ENCODE measurements at regions of chr20 and their contacts with region 1.

Region 1: DNA sequence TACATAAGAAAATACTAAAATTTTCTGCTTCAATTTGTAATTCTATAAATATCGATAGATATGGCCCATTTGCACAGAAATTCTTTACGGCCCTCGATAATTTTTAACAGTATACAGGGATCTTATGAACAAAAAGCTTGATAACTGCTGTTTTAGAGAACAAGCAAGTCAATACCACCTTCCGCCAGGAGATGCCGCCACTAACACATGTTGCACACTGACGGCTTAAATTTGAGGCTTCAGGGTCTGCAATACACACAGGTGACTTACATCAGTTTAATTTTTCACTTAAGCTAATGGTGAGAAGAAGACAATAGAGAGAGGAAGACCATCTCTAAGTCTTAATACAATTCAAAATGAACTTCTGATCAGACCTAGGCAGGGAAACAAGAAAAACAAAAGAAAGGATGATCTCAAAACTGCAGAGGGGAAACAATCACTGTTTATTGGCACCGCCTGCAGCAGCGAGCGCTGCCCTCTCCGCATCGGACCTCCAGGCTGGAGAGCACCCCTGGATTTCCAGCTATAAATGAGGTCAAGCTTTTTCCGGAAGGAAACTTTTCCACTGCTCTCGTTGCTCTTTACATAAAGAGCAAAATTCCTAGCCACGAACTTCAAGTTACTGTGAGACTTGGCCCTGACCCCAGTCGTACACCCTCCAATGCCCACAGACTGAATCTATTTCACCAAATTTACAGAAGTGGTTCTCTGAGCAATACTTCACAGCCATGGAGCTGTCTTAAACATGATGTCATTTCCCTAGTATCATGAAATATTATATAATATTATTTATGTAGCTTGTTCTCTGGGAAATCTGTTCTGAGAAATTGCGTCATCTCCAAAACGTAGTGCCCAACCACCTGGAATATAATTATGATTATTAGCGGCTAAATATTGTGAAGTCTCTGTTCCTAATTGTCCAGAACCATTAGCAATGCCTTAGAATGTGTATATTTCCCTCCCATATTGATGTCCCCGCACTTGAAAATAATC is 54.1 kb downstream of the OTOR start:
- DNase-seq: peak; percentile 29 to 35
- ATAC-seq: no peak
- H3K4me3 ChIP-seq: no peak overlapping the region
- H3K27ac ChIP-seq: no peak overlapping the region
- H3K4me1 ChIP-seq: no peaks in the 10 kb centered on the region
- H3K27me3 ChIP-seq: peaks cover 0 to 77% (median 48%) of the 10 kb centered on the region in 7 donors
- CTCF ChIP-seq: peak; percentile 63 to 87 (median 77)

Region 2: GRCh38 chr20:16816192-16816591 is 14.0 kb after region 1 on chr20:
- intact Hi-C with region 1: no loop called
- DNase-seq: no peak
- ATAC-seq: no peak
- H3K4me3 ChIP-seq: no peak overlapping the region
- H3K27ac ChIP-seq: no peak overlapping the region
- H3K4me1 ChIP-seq: no peaks in the 10 kb centered on the region
- H3K27me3 ChIP-seq: peaks cover 0 to 16% (median 0%) of the 10 kb centered on the region in 7 donors
- CTCF ChIP-seq: no peak

Region 3: DNA sequence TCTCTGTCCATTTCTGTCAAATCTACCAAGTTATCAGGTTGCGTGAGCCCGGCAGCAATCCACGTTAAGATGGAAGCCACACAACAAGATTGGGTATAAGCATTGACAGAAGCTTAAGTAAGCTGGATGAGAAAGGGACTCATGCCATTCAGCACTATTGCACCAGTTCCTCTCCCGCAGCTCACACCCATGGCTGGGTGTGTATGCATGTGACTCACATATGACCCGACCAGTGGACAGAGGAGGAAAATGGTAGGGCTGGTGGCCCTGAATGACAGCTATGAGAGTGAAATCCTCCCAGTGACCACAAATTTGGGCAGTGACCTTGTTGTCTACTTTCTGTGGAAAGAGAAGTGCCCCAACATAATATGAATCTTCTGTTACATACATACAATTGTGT is 59.5 kb after region 1 on chr20:
- intact Hi-C with region 1: no loop called
- DNase-seq: no peak
- ATAC-seq: no peak
- H3K4me3 ChIP-seq: no peak overlapping the region
- H3K27ac ChIP-seq: no peak overlapping the region
- H3K4me1 ChIP-seq: no peaks in the 10 kb centered on the region
- H3K27me3 ChIP-seq: no peaks in the 10 kb centered on the region
- CTCF ChIP-seq: no peak

Region 4: GRCh38 chr20:17431621-17432364 is 629.6 kb after region 1 on chr20:
- intact Hi-C with region 1: loop called in 9 of 10 experiments (anchors 2 to 5 kb)
- DNase-seq: peak; percentile 34 to 36
- ATAC-seq: no peak
- H3K4me3 ChIP-seq: no peak overlapping the region
- H3K27ac ChIP-seq: no peak overlapping the region
- H3K4me1 ChIP-seq: peaks cover 0 to 7% (median 0%) of the 10 kb centered on the region in 9 donors
- H3K27me3 ChIP-seq: peaks cover 0 to 64% (median 31%) of the 10 kb centered on the region in 7 donors
- CTCF ChIP-seq: peak; percentile 71 to 93 (median 88)

Region 5: GRCh38 chr20:17995967-17996819 is 1194.0 kb after region 1 on chr20:
- intact Hi-C with region 1: loop called in 1 of 10 experiments (anchors 10 kb)
- DNase-seq: peak in 1 of 2 donors; percentile 46
- ATAC-seq: peak in 6 of 8 donors; percentile 62 to 79 (median 70)
- H3K4me3 ChIP-seq: peak overlapping the region in 1 of 10 donors; percentile 15
- H3K27ac ChIP-seq: no peak overlapping the region
- H3K4me1 ChIP-seq: peaks cover 0 to 11% (median 0%) of the 10 kb centered on the region in 9 donors
- H3K27me3 ChIP-seq: no peaks in the 10 kb centered on the region
- CTCF ChIP-seq: peak; percentile 89 to 98 (median 96)

Measured in heart right ventricle (tissue), 16 donors.